Cardiac septum (tissue), 1 donor: ENCODE measurements at regions of chr9 and their contacts with region 1.

Region 1: DNA sequence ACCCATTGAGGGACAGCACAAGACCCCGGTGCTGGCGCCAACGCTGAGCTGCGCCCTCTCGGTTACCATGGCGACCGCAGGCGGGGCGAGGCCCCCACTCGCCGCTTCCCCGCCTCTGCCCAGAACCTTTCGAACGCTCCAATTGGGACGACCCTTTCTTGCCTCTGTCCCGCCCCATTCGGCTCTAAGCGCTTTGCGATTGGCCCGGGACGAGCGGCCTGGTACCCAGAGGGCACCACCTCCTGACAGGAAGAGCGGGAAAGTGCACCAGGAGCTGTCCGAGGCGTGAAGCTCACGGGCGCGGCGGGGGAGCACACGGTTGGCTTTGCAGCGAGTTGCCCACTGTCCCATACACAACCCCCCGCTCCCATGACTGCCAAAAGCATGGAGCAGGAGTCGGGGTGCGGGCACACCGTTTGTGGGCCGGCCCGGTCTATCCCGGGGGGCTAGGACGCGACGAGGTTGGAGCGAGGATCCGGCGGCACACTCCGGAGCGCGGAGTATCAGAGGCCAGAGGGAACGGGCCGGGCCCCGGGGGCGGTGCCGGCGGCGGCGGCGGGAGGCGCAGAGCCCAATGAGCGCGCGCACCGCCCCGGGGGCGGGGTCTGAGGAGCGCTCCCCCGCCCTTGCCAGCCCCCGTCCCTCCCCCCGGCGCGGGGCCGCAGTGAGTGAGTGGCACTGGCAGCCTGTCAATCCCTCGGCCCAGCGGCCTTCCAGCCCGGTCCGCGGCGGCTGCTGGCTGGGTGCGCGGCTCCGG is 978 bp upstream of the PBX3 start:
- DNase-seq: peak; percentile 98

Region 2: GRCh38 chr9:125820100-125820804 is 74.1 kb after region 1 on chr9:
- intact Hi-C with region 1: loop called (anchors 2 kb)
- DNase-seq: no peak

Region 3: DNA sequence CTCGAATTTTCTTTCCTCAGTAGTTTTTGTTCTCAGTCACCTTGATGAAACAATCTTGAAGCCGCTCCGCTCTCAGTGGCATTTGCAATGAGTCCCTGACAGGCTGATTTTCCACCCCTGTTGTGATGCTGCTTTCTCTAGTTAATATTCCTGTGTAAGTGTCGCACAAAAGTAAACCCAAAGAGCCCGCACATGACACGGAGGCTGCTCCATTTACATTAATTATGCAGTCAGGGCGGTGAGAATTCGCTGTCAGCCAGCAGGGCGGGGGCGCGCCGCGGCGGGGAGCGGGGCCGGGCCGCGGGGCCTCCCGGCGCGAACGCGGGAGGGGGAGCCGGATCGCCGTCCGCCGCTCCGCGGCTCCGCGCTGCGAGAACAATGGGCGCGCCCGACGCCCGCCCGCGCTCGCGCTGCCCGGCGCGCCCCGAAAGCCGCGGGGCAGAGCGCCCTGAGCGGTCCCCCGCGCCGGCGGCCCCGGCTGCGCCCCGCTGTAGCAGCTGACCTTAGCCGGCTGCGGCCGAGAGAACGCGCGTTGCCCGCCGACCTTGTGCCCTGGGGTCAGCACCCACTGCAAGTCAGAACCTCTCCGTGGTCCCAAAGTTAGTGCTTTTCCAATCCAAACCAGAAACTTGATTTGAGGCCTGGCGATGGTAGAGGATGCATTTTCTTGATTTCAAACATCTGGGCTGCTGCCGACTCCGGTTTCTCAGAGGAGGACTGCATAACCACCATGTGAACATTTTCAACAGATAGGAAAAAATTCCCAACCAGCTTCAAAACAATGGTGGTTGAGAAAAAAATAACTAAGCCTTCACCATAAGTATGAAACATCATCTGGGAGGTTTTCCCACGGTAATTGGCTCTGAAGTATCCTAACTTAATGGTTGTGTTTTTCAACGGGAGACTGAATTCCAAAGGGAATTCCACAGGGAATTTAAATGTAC is 143.6 kb after region 1 on chr9:
- intact Hi-C with region 1: loop called (anchors 2 kb)
- DNase-seq: peak; percentile 73

Region 4: DNA sequence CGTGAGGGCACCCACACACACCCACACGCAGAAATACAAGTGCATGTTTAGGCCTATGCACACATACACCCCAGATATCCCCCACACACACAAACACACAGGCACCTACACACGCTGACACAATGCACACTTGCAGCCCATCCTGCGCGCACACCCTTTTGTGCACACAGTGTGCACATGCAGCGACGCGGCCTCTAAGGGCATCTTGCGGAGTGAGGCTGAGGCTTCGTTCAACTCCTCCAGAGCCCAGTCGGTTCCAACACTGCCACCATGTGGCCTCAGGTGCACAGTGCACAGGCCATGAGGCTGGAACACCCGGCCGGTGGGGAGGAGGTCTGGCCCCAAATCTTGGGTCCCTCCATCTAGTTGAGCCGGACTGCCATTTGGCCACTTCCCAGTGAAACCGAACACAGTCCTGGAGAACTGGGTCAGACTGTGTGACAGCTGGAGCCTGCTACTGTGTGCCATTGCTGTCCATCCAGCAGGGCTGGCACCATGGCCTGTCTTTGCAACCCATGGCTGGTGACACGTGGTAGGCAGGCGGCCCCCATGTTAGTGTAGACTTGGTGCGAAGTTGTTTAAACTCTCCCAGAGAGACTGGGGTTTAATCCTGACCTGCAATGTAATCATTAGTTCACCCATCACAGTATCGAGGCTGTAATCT is 482.7 kb after region 1 on chr9:
- intact Hi-C with region 1: loop called (anchors 10 kb)
- DNase-seq: peak; percentile 83